Astrocyte of the cerebellum (primary cell): ENCODE measurements at regions of chr3 and their contacts with region 1.

Region 1: GRCh38 chr3:10732292-10732691 is 83.7 kb upstream of the SLC6A11 start:
- DNase-seq: no peak
- H3K4me3 ChIP-seq: no peak overlapping the region
- CTCF ChIP-seq: no peak

Region 2: DNA sequence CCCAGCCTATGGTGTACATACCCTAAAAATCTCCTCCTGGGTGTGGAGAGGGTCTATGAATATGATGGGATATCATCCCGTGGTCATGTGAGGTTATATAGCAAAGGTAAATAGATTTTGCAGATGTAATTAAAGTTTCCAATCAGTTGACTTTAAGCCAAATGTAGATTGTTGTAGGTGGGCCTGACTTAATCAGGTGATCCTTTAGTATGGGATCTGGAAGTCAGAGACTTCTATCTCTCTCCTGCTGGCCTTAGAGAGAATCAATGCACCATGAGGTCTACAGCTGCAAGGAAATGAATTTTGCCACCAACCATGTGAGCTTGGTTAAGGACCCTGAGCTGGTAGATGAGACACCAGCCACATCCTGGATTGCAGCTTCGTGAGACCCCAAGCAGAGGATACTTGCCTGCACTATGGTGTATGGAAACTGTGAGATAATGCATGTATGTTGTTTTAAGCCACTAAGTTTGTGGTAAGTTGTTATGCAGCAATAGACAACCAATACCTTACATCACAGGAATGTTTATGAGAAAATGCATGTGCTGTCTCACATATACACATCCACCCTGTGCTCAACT is 53.4 kb before region 1 on chr3:
- in situ Hi-C with region 1: loop called (anchors 5 kb)
- DNase-seq: no peak
- H3K4me3 ChIP-seq: no peak overlapping the region
- CTCF ChIP-seq: no peak